ENCODE measurements at regions of chr6 and their contacts with region 1.

Region 1: DNA sequence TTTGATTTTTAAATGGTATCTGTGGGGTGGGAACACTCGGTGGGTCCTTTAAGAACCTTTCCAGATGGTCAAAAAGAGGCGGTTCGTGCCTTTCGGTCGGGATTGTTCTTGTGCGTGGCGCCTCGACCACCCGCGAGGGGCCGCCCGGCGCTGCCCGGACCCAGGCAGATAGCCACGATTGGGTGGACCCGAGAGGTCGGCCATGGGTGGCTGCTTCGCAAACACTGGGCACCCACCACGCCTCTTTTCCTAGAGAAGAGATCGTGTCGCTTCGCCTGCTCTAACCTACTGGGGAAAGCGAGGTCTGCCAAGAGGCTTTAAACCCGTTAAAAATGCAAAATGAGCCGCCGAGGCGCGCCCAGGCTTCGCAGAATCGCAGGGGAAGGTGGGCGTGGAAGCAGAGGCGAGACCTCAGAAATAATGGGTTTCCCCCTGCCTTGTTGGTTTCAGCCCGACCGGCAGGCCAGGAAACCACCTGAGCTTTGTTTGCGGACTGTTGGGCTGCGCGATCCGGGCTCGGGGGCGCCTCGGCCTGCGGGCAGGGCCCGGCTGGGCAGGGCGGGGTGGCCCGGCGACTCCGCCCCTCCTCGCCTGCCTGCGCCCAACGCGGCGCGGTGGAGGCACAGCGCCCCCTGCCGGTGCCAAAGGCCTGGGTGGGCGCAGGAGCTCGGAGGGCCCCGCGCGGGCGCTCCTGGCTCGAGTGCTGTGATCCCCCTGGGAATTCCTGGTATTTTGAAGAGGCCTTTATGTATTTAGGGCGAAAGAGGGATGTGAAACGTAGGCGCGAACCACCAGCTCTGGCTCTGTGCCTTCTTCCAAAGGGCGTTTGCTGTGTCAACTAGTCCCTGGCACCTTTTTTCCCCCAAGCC is 1.6 kb downstream of the MARCKS start:
- DNase-seq: peak; percentile 39 to 88 (median 73)
- ATAC-seq: peak; percentile 83
- H3K4me3 ChIP-seq: peak overlapping the region; percentile 28 to 46
- H3K4me3 Mint-ChIP-seq: peak overlapping the region; percentile 58
- H3K27ac ChIP-seq: no peak overlapping the region
- H3K27ac Mint-ChIP-seq: no peak overlapping the region
- H3K4me1 ChIP-seq: peaks cover 41% of the 10 kb centered on the region
- H3K4me1 Mint-ChIP-seq: peaks cover 5% of the 10 kb centered on the region
- H3K27me3 ChIP-seq: peaks cover 40 to 44% of the 10 kb centered on the region in 2 experiments
- H3K27me3 Mint-ChIP-seq: peaks cover 28% of the 10 kb centered on the region
- CTCF ChIP-seq: peak; percentile 73

Region 2: DNA sequence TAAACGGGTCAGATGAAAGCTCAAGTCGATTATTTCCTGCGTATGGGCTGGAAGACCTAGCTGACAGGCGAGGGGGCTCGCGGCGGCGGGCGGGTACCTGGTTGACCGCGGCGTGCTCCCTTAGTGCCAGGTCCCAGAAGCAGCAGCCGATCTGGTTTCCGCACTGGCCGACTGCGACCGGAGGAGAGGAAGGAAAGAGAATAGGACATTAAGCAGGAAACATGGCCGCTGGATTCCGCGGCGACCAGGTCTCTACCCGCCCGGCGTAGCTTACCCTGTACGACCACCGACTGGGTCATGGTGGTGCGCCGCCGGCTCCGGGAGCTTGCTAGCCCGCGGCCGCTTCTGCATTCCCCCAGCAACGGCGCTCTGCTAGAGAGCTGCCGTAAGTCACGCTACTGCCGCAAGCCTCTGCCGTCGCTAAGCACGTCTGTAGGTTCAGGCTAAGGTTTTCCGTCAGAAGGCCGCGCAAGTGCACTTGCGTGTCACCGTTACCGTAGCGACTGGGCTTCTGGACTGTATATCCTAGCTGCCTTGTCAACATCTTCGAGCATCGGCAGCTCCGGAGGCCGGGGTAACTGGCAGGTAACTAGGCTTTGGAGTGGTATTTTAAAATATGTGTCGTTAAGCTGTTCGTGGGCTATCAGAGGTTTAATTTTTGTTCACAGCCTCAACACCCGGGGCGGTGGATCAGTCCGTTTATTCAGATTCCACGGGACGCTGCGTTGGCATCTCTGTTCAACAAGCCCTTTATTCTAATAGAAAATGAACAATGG is 1771.4 kb before region 1 on chr6 and contains the starts of genes FAM229B and TUBE1:
- CTCF ChIA-PET with region 1: no interaction called
- POLR2A ChIA-PET with region 1: no interaction called
- intact Hi-C with region 1: loop called in 1 of 2 experiments (anchors 5 kb)
- DNase-seq: peak; percentile 82 to 97 (median 89)
- ATAC-seq: peak; percentile 97
- H3K4me3 ChIP-seq: peak within 1 kb of the TSS; percentile 75 to 80
- H3K4me3 Mint-ChIP-seq: no peak within 1 kb of the TSS
- H3K27ac ChIP-seq: peak within 1 kb of the TSS; percentile 89 to 97
- H3K27ac Mint-ChIP-seq: no peak within 1 kb of the TSS
- H3K4me1 ChIP-seq: peaks cover 9% of the 10 kb centered on the region
- H3K4me1 Mint-ChIP-seq: peaks cover 12% of the 10 kb centered on the region
- H3K27me3 ChIP-seq: no peaks in the 10 kb centered on the region
- H3K27me3 Mint-ChIP-seq: peaks cover 3% of the 10 kb centered on the region
- CTCF ChIP-seq: no peak
- total RNA-seq, gene FAM229B: 3.1 to 3.3 TPM
- total RNA-seq, gene TUBE1: 25.6 to 30.5 TPM

Region 3: GRCh38 chr6:112180095-112180820 is 1678.5 kb before region 1 on chr6:
- CTCF ChIA-PET with region 1: interaction called, 15 read pairs
- POLR2A ChIA-PET with region 1: no interaction called
- intact Hi-C with region 1: loop called in 1 of 2 experiments (anchors 1 kb)
- DNase-seq: peak in 7 of 9 experiments; percentile 17 to 88 (median 52)
- ATAC-seq: peak; percentile 58
- H3K4me3 ChIP-seq: no peak overlapping the region
- H3K4me3 Mint-ChIP-seq: no peak overlapping the region
- H3K27ac ChIP-seq: no peak overlapping the region
- H3K27ac Mint-ChIP-seq: no peak overlapping the region
- H3K4me1 ChIP-seq: no peaks in the 10 kb centered on the region
- H3K4me1 Mint-ChIP-seq: no peaks in the 10 kb centered on the region
- H3K27me3 ChIP-seq: peaks cover 0 to 3% of the 10 kb centered on the region in 2 experiments
- H3K27me3 Mint-ChIP-seq: peaks cover 27% of the 10 kb centered on the region
- CTCF ChIP-seq: peak; percentile 84

Region 4: GRCh38 chr6:113306552-113307145 is 552.1 kb before region 1 on chr6:
- CTCF ChIA-PET with region 1: no interaction called
- POLR2A ChIA-PET with region 1: no interaction called
- intact Hi-C with region 1: loop called in 1 of 2 experiments (anchors 2 kb)
- DNase-seq: peak in 6 of 9 experiments; percentile 11 to 48 (median 25)
- ATAC-seq: no peak
- H3K4me3 ChIP-seq: no peak overlapping the region
- H3K4me3 Mint-ChIP-seq: no peak overlapping the region
- H3K27ac ChIP-seq: no peak overlapping the region
- H3K27ac Mint-ChIP-seq: no peak overlapping the region
- H3K4me1 ChIP-seq: no peaks in the 10 kb centered on the region
- H3K4me1 Mint-ChIP-seq: no peaks in the 10 kb centered on the region
- H3K27me3 ChIP-seq: no peaks in the 10 kb centered on the region
- H3K27me3 Mint-ChIP-seq: no peaks in the 10 kb centered on the region
- CTCF ChIP-seq: peak; percentile 13

Region 5: GRCh38 chr6:113970805-113971676 is 112.3 kb after region 1 on chr6 and contains the start of gene HDAC2:
- CTCF ChIA-PET with region 1: no interaction called
- POLR2A ChIA-PET with region 1: interaction called, 3 read pairs
- intact Hi-C with region 1: loop called in 1 of 2 experiments (anchors 2 kb)
- DNase-seq: peak; percentile 61 to 92 (median 84)
- ATAC-seq: peak; percentile 77
- H3K4me3 ChIP-seq: peak within 1 kb of the TSS; percentile 72 to 99
- H3K4me3 Mint-ChIP-seq: peak within 1 kb of the TSS; percentile 95
- H3K27ac ChIP-seq: peak within 1 kb of the TSS; percentile 78 to 93
- H3K27ac Mint-ChIP-seq: peak within 1 kb of the TSS; percentile 97
- H3K4me1 ChIP-seq: peaks cover 30% of the 10 kb centered on the region
- H3K4me1 Mint-ChIP-seq: peaks cover 42% of the 10 kb centered on the region
- H3K27me3 ChIP-seq: no peaks in the 10 kb centered on the region
- H3K27me3 Mint-ChIP-seq: no peaks in the 10 kb centered on the region
- CTCF ChIP-seq: no peak
- total RNA-seq, gene HDAC2: 34.6 to 35.0 TPM